Caco-2 (cell line): ENCODE measurements at regions of chr6 and their contacts with region 1.

Region 1: GRCh38 chr6:138001750-138002349 is 105.4 kb downstream of the PERP start:
- DNase-seq: peak; percentile 53 to 69
- H3K4me3 ChIP-seq: no peak overlapping the region
- H3K4me3 Mint-ChIP-seq: no peak overlapping the region
- H3K27ac Mint-ChIP-seq: no peak overlapping the region
- H3K4me1 ChIP-seq: peaks cover 2% of the 10 kb centered on the region; the same call in 1 of the 2 replicates
- H3K4me1 Mint-ChIP-seq: peaks cover 9% of the 10 kb centered on the region
- H3K27me3 ChIP-seq: no peaks in the 10 kb centered on the region
- H3K27me3 Mint-ChIP-seq: no peaks in the 10 kb centered on the region
- CTCF ChIP-seq: peak; percentile 87

Region 2: GRCh38 chr6:137953761-137954160 is 48.1 kb before region 1 on chr6:
- CTCF ChIA-PET with region 1: no interaction called
- POLR2A ChIA-PET with region 1: no interaction called
- intact Hi-C with region 1: no loop called
- DNase-seq: no peak
- H3K4me3 ChIP-seq: no peak overlapping the region
- H3K4me3 Mint-ChIP-seq: no peak overlapping the region
- H3K27ac Mint-ChIP-seq: no peak overlapping the region
- H3K4me1 ChIP-seq: peaks cover 16% of the 10 kb centered on the region; the same call in 1 of the 2 replicates
- H3K4me1 Mint-ChIP-seq: peaks cover 28% of the 10 kb centered on the region
- H3K27me3 ChIP-seq: no peaks in the 10 kb centered on the region
- H3K27me3 Mint-ChIP-seq: no peaks in the 10 kb centered on the region
- CTCF ChIP-seq: no peak

Region 3: GRCh38 chr6:137975188-137975940 is 26.5 kb before region 1 on chr6:
- CTCF ChIA-PET with region 1: no interaction called
- POLR2A ChIA-PET with region 1: no interaction called
- intact Hi-C with region 1: loop called (anchors 1 kb)
- DNase-seq: no peak
- H3K4me3 ChIP-seq: no peak overlapping the region
- H3K4me3 Mint-ChIP-seq: no peak overlapping the region
- H3K27ac Mint-ChIP-seq: peak overlapping the region; percentile 26
- H3K4me1 ChIP-seq: peaks cover 46% of the 10 kb centered on the region
- H3K4me1 Mint-ChIP-seq: peaks cover 34% of the 10 kb centered on the region
- H3K27me3 ChIP-seq: no peaks in the 10 kb centered on the region
- H3K27me3 Mint-ChIP-seq: no peaks in the 10 kb centered on the region
- CTCF ChIP-seq: peak in 1 of 2 experiments; percentile 25

Region 4: GRCh38 chr6:138063726-138064125 is 61.9 kb after region 1 on chr6:
- CTCF ChIA-PET with region 1: no interaction called
- POLR2A ChIA-PET with region 1: no interaction called
- intact Hi-C with region 1: no loop called
- DNase-seq: no peak
- H3K4me3 ChIP-seq: no peak overlapping the region
- H3K4me3 Mint-ChIP-seq: no peak overlapping the region
- H3K27ac Mint-ChIP-seq: no peak overlapping the region
- H3K4me1 ChIP-seq: no peaks in the 10 kb centered on the region
- H3K4me1 Mint-ChIP-seq: no peaks in the 10 kb centered on the region
- H3K27me3 ChIP-seq: no peaks in the 10 kb centered on the region
- H3K27me3 Mint-ChIP-seq: no peaks in the 10 kb centered on the region
- CTCF ChIP-seq: no peak

Region 5: GRCh38 chr6:138109042-138109997 is 107.5 kb after region 1 on chr6:
- CTCF ChIA-PET with region 1: interaction called, 12 read pairs
- POLR2A ChIA-PET with region 1: no interaction called
- intact Hi-C with region 1: loop called (anchors 1 kb)
- DNase-seq: peak; percentile 55 to 74
- H3K4me3 ChIP-seq: no peak overlapping the region
- H3K4me3 Mint-ChIP-seq: peak overlapping the region; percentile 55
- H3K27ac Mint-ChIP-seq: peak overlapping the region; percentile 33
- H3K4me1 ChIP-seq: peaks cover 8% of the 10 kb centered on the region
- H3K4me1 Mint-ChIP-seq: peaks cover 6% of the 10 kb centered on the region
- H3K27me3 ChIP-seq: no peaks in the 10 kb centered on the region
- H3K27me3 Mint-ChIP-seq: no peaks in the 10 kb centered on the region
- CTCF ChIP-seq: peak; percentile 72 to 84

Region 6: DNA sequence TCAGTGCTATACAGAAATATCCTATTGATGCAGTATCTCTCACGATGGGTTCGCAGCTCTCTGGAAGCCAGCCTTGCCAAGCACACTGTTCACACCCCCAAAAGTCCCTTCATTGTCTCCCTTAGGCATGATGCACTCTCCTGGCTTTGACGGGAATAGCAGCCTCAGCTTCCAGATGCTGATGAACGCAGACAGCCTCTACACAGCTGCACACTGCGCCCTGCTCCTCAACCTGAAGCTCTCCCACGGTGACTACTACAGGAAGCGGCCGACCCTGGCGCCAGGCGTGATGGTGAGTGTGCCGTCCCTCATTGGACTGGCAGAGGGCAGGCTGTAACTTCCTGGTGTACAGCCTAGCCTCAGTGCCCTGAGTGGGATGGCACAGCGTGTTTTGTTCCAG is 276.5 kb after region 1 on chr6:
- CTCF ChIA-PET with region 1: interaction called, 5 read pairs
- POLR2A ChIA-PET with region 1: no interaction called
- intact Hi-C with region 1: loop called (anchors 1 kb)
- DNase-seq: peak; percentile 43 to 53
- H3K4me3 ChIP-seq: no peak overlapping the region
- H3K4me3 Mint-ChIP-seq: no peak overlapping the region
- H3K27ac Mint-ChIP-seq: no peak overlapping the region
- H3K4me1 ChIP-seq: no peaks in the 10 kb centered on the region
- H3K4me1 Mint-ChIP-seq: no peaks in the 10 kb centered on the region
- H3K27me3 ChIP-seq: no peaks in the 10 kb centered on the region
- H3K27me3 Mint-ChIP-seq: no peaks in the 10 kb centered on the region
- CTCF ChIP-seq: peak; percentile 28 to 75

Region 7: DNA sequence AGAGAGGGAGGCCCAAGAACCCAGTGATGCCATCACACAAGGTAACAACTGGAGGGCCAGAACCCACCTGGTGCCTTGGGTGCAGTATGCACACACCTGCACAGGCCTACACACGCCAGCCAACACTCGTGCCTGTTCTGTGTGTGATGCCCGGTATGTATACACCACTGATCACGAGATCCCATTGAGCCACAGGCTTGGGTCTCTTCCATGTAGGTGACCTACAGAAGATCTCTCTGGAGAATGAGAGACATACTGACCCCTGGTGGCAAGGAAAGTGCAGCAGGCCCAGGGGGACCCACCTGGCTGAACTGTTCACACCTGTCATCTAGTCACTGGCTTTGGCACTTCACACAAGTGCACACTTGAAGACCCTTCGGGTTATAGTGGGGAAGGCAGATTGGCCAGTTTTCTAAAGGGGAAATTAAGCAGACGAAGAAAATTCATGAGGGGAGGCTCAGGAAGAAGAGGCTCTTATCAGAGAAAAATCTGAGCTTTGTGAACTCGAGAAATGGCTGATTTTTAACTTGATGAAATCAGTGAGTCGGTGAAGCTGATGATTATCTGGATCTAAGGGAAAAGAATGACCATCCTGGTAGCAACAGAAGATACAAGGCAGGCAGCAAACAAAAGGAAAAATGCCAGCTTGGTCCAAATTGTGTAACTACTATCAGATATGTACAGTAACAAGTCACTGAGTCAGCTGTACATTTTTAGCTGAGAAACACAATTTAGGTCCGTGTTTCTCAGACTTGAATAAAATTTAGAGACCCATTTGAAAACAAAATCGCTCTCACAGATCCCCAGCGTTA is 285.5 kb after region 1 on chr6:
- CTCF ChIA-PET with region 1: interaction called, 3 read pairs
- POLR2A ChIA-PET with region 1: no interaction called
- intact Hi-C with region 1: loop called (anchors 1 kb)
- DNase-seq: peak; percentile 69 to 77
- H3K4me3 ChIP-seq: no peak overlapping the region
- H3K4me3 Mint-ChIP-seq: no peak overlapping the region
- H3K27ac Mint-ChIP-seq: peak overlapping the region; percentile 13
- H3K4me1 ChIP-seq: no peaks in the 10 kb centered on the region
- H3K4me1 Mint-ChIP-seq: no peaks in the 10 kb centered on the region
- H3K27me3 ChIP-seq: no peaks in the 10 kb centered on the region
- H3K27me3 Mint-ChIP-seq: no peaks in the 10 kb centered on the region
- CTCF ChIP-seq: peak; percentile 69 to 81

Region 8: GRCh38 chr6:138297761-138298298 is 296.0 kb after region 1 on chr6:
- CTCF ChIA-PET with region 1: no interaction called
- POLR2A ChIA-PET with region 1: no interaction called
- intact Hi-C with region 1: no loop called
- DNase-seq: no peak
- H3K4me3 ChIP-seq: no peak overlapping the region
- H3K4me3 Mint-ChIP-seq: no peak overlapping the region
- H3K27ac Mint-ChIP-seq: no peak overlapping the region
- H3K4me1 ChIP-seq: no peaks in the 10 kb centered on the region
- H3K4me1 Mint-ChIP-seq: peaks cover 13% of the 10 kb centered on the region
- H3K27me3 ChIP-seq: no peaks in the 10 kb centered on the region
- H3K27me3 Mint-ChIP-seq: no peaks in the 10 kb centered on the region
- CTCF ChIP-seq: no peak

Region 9: GRCh38 chr6:138403801-138404661 is 402.2 kb after region 1 on chr6 and contains the start of gene HEBP2:
- CTCF ChIA-PET with region 1: no interaction called
- POLR2A ChIA-PET with region 1: no interaction called
- intact Hi-C with region 1: loop called (anchors 5 kb)
- DNase-seq: peak; percentile 99
- H3K4me3 ChIP-seq: peak within 1 kb of the TSS; percentile 81
- H3K4me3 Mint-ChIP-seq: peak within 1 kb of the TSS; percentile 81
- H3K27ac Mint-ChIP-seq: peak within 1 kb of the TSS; percentile 81
- H3K4me1 ChIP-seq: peaks cover 11% of the 10 kb centered on the region; the same call in 1 of the 2 replicates
- H3K4me1 Mint-ChIP-seq: no peaks in the 10 kb centered on the region
- H3K27me3 ChIP-seq: no peaks in the 10 kb centered on the region
- H3K27me3 Mint-ChIP-seq: no peaks in the 10 kb centered on the region
- CTCF ChIP-seq: peak; percentile 53 to 65
- total RNA-seq, gene HEBP2: 64.3 and 73.1 TPM in 2 replicates